ENCODE measurements at regions of chr3 and their contacts with region 1.

Region 1: DNA sequence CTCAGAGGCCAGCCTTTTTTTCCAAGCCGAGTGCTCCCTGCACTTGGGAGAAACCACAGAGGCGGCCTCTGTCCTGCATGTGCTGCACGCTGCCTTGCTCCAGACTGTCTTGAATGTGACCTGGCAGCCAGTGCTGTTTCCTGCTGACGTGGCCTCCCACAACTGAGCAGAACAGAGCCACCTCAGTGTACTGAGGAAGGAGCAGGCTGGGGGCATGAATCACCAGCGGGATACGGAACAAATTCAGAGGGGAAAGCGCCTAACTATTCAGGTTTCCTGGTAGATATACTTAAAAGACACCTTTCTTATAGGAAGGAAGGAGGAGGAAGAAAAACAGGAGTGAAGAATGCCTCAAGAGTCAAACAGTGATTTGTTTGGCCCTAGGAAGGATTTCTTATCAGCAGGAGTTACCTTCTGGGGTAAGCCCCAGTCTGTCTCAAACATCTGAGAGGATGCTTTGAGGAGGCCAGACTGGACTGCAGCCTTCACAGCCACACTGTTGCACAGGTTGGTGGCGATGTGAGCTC is 114.0 kb downstream of the FNDC3B start:
- DNase-seq: peak; percentile 92
- ATAC-seq: peak; percentile 99

Region 2: GRCh38 chr3:172113710-172114109 is 39.7 kb before region 1 on chr3:
- intact Hi-C with region 1: loop called (anchors 1 kb)
- DNase-seq: no peak
- ATAC-seq: no peak